A549 (cell line): ENCODE measurements at regions of chr16 and their contacts with region 1.

Region 1: DNA sequence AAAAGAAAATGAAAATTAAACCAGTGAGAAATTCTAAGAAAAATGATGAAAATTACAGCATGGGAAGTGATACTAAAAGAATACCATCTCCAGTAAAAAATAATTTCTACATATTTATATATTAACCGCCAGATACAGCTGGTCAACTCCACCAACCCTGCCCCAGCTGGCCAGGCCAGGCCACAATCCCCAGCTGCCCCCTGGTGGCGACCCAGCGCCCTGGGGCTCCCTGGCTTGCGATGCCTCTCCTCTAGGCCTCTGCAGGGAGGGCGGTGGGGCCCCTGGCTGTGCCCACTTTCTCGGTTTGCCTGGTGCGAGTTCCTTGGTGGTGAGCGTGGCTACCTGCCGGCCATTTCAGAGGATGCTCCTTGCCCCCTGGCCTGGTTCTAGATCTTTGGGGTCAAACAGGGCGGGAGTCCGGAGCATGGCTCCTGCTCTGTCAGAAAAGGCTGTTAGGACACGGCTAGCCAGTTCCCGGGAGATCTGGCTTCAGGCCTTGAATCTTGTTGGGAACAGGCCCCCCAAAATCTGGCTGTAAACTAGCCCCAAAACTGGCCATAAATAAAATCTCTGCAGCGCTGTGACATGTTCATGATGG is 14.5 kb downstream of the GLIS2 start:
- DNase-seq: peak; percentile 72 to 77
- ATAC-seq: peak; percentile 84 to 90
- H3K4me3 ChIP-seq: no peak overlapping the region
- H3K27ac ChIP-seq: peak overlapping the region in 1 of 2 experiments; percentile 87; a peak in 1 of 6 replicates
- H3K4me1 ChIP-seq: peaks cover 44% of the 10 kb centered on the region
- CTCF ChIP-seq: peak; percentile 92
- EP300 ChIP-seq: no peak
- POLR2A ChIP-seq: no peak
- RAD21 ChIP-seq: peak; percentile 94 to 97

Region 2: DNA sequence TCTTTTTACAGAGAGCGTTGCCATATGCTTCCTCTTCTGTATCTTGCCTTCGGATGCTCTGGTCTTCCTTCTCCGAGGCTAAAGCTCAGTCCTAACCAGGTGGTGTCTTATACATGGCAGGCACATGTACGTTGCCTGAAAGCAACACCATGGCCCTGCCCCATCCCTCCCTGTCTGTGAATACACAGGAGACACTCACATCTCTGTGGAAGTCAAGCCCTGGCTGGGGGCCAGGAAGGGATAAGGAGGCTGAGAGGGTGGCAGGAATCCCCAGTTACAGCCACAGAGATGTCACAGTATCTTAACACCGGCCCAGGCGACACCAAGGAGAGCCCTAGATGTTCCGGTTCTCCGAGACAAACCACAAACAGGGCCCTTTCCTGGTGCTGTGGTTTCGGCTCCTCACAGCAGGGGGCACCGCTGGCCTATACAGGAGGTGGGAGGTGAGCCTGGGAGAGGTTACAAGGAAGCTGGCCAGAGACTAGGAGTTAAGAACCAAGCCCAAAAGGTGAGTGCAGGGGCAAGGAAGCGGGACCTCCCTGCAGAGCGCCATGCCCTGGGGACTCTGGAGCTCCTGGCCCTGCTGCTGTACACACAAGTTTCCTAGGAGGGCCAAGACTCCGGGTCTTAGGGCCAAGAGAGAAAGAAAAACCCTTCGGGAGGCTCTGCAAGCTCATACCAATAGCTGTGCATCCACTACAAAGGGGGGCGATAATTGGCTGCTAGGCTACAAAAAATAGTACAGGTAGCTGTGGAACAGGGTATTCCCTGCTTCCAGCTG is 130.2 kb before region 1 on chr16:
- CTCF ChIA-PET with region 1: interaction called, 19 read pairs
- POLR2A ChIA-PET with region 1: no interaction called
- DNase-seq: peak; percentile 72 to 74
- ATAC-seq: peak; percentile 96
- H3K4me3 ChIP-seq: no peak overlapping the region
- H3K27ac ChIP-seq: peak overlapping the region in 1 of 2 experiments; percentile 65; a peak in 3 of 6 replicates
- H3K4me1 ChIP-seq: peaks cover 7% of the 10 kb centered on the region; the same call in 2 of the 3 replicates
- CTCF ChIP-seq: peak; percentile 66
- EP300 ChIP-seq: no peak
- POLR2A ChIP-seq: no peak
- RAD21 ChIP-seq: peak; percentile 86 to 89

Region 3: GRCh38 chr16:4261557-4262172 is 68.7 kb before region 1 on chr16:
- CTCF ChIA-PET with region 1: interaction called, 45 read pairs
- POLR2A ChIA-PET with region 1: no interaction called
- DNase-seq: peak; percentile 54 to 78
- ATAC-seq: peak; percentile 55 to 81; a peak in 5 of 6 replicates
- H3K4me3 ChIP-seq: no peak overlapping the region
- H3K27ac ChIP-seq: no peak overlapping the region
- H3K4me1 ChIP-seq: peaks cover 9% of the 10 kb centered on the region; the same call in 1 of the 3 replicates
- CTCF ChIP-seq: peak; percentile 69
- EP300 ChIP-seq: no peak
- POLR2A ChIP-seq: no peak
- RAD21 ChIP-seq: peak; percentile 64 to 67

Region 4: GRCh38 chr16:4298761-4299522 is 31.4 kb before region 1 on chr16:
- CTCF ChIA-PET with region 1: interaction called, 423 read pairs
- POLR2A ChIA-PET with region 1: no interaction called
- DNase-seq: peak; percentile 95 to 97
- ATAC-seq: peak; percentile 96 to 99
- H3K4me3 ChIP-seq: peak overlapping the region; percentile 11; the same call in 1 of the 3 replicates
- H3K27ac ChIP-seq: peak overlapping the region; percentile 94 to 99
- H3K4me1 ChIP-seq: peaks cover 57% of the 10 kb centered on the region
- CTCF ChIP-seq: no peak
- EP300 ChIP-seq: peak in 1 of 2 experiments; percentile 49; a peak in 2 of 5 replicates
- POLR2A ChIP-seq: peak; percentile 26; the same call in 1 of the 2 replicates
- RAD21 ChIP-seq: peak; percentile 15 to 39; a peak in 2 of 5 replicates

Region 5: GRCh38 chr16:4307215-4308037 is 22.9 kb before region 1 on chr16:
- CTCF ChIA-PET with region 1: interaction called, 423 read pairs
- POLR2A ChIA-PET with region 1: interaction called, 4 read pairs
- DNase-seq: peak; percentile 87 to 96
- ATAC-seq: peak; percentile 86 to 87
- H3K4me3 ChIP-seq: peak overlapping the region; percentile 88
- H3K27ac ChIP-seq: peak overlapping the region; percentile 90 to 93
- H3K4me1 ChIP-seq: peaks cover 35% of the 10 kb centered on the region
- CTCF ChIP-seq: no peak
- EP300 ChIP-seq: peak in 1 of 2 experiments; percentile 61; a peak in 1 of 5 replicates
- POLR2A ChIP-seq: peak; percentile 53
- RAD21 ChIP-seq: no peak; a peak in 1 of 5 replicates

Region 6: GRCh38 chr16:4640572-4641305 is 310.4 kb after region 1 on chr16:
- CTCF ChIA-PET with region 1: no interaction called
- POLR2A ChIA-PET with region 1: no interaction called
- DNase-seq: no peak
- ATAC-seq: peak in 1 of 2 experiments; percentile 16; a peak in 2 of 6 replicates
- H3K4me3 ChIP-seq: no peak overlapping the region
- H3K27ac ChIP-seq: no peak overlapping the region
- H3K4me1 ChIP-seq: no peaks in the 10 kb centered on the region
- CTCF ChIP-seq: no peak
- EP300 ChIP-seq: no peak
- POLR2A ChIP-seq: no peak
- RAD21 ChIP-seq: no peak